ENCODE measurements at regions of chr11 and their contacts with region 1.

Region 1: DNA sequence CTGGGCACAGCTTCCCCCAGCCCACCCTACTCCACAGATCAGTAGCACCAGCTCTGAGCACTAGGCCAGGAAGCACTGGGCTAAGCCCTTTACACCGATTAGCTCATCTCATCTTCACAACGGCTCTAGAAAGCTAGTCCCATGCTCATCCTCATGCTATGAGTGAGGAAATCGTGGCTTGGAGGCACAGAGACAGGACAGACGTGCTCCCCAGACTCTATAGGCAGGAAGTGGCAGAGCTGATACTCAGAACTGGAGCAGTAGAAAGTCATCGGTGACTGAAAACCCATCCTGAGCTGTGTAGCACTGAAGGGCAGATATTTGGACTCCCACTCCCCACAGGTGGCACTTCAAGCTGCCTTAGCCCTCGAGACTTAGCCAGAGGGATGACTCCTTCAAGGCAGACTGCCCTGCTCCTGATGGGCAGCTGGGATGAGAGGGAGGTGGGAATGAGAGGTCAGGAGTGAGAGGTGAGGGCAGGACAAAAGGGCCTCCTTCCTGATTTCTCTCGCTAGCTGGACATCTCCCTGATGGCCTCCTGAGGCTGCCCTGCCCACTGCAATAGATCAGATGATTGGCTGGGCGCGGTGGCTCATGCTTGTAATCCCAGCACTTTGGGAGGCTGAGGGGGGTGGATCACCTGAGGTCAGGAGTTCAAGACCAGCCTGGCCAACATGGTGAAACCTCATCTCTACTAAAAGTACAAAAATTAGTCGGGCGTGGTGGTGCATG is 9.7 kb downstream of the CD5 start:
- DNase-seq: no peak
- ATAC-seq: no peak

Region 2: DNA sequence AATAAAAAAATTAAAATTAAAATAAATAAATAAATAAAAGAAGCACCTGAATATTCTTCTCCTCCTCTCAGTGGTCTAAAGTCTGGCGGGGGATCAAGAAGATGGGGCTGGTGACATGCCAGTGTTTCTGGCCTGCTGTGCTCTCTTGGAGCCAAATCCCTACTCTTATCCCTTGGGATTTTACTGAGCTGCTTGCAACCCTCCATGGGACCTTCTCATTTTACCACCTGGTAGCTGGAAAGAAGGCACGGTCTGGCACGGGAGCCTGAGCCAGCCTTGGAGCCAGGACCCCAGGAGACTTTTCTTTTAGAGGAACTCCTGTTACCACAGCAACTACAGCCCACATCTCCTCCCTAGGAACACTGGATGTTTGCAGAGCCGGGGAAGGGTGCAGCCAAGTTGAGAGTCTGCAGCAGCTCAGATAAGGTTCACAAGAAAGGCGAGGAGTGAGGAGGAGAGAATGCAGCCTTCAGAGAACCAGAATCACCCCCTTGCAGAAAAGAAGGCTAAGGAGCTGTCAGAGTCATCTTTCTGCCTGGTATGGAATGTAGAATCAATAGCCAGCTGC is 119.0 kb before region 1 on chr11:
- intact Hi-C with region 1: loop called in 1 of 2 experiments (anchors 10 kb)
- DNase-seq: no peak
- ATAC-seq: peak in 1 of 2 donors; percentile 56

Region 3: DNA sequence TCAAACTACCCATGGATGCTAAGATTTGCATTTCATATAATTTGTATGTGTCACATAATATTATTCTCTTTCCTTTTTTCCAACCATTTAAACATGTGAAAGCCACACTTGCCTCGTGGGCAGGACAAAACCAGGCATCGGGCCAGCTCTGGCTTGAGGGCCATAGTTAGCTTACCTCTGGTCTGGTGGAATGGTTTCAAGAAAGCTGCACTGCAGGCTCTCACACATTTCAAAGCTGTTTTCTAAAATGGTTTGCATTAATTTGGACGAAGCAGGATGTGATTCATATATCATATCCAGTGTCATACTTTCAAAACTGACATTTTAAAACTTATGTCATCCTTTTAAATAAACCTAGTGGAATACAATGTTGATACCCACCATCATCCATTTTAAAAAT is 74.3 kb before region 1 on chr11:
- intact Hi-C with region 1: no loop called
- DNase-seq: no peak
- ATAC-seq: no peak

Region 4: DNA sequence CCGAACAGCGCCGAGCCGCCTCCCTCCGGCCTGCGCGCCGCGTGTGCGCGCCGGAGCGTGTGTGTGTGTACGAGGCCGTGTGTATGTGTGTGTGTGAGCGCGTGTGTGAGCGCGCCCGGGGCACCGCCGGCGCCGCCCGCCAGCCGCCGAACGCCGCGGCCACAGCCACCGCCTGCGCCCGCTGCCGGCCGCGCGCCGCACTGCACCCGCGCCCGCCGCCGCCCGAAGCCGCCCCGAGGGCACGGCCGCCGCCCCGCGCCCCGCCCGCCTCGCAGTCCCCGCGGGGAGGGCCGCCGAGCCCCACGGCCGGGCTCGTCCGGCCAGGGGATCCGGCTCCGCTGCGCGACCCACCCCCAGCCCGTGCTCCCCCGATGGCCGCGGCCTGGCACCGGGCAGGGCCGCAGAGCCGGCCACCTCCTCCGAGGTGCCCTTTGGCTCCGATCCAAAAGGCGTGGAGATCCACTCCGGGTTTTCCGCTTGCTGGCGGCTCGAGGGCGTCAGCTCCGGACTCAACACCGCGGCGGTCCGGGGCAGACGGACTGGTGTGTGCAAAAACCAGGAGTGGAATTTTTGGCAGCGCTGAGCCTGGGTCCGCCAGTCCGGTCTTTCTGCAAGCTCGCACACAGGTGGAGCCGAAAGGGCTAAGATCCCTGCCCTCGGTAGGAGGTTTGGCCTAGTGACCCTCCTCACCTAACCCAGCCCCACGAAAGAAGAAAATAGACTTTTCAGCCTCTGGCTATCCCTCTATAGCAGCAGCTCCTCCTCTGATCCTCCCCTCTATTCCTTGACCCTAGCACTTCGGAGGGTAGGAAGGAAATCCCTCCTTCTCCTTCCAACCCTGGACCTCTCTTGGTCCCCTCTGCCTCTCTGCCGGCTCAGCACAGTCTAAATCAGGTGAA is 469.3 kb after region 1 on chr11 and contains the start of gene SYT7:
- intact Hi-C with region 1: no loop called
- DNase-seq: peak; percentile 95
- ATAC-seq: peak; percentile 87 to 92
- total RNA-seq, gene SYT7: 36.7 to 39.7 TPM